Right ventricle myocardium inferior (tissue), 1 donor: ENCODE measurements at regions of chr2 and their contacts with region 1.

Region 1: DNA sequence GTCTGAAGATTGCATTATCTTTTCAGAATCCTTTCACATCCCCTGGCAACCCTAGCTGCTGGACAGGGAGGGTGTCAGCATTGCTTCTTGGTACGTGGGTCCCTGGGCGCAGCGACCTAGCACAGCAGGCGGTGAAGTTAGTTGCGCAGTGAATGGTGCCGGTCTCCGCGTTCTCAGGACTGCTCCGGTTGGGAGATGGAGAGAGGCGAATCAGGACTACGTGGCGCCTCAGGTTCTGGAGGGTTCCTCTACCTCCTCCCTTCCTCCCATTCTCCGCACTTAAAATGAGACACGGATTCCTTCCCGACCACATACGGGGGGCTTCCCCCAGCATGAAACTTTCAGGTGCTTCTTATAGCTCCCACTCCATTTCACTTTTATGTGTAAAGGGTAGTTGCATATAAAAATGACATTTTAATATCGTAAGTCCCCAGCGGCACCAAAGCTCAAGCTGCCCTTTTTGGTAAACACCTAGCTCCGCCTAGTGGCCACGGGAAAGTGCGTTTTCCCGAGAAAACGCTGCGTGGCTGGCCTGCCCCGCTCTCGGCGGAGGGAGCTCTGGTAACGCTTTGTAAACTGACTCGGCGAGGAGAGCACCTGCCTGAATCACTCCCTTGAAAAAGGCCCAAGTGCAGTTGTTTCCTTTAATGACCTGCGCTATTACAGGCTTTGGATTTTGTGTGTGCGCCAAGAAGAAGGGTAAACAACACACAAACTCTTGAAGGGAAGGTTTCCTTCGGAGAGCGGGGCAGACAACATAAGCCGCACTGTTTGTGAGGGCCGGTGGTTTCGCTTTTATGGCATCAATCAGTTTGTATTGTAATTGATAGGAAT is 32.9 kb upstream of the INHBB start:
- DNase-seq: peak; percentile 86
- ATAC-seq: peak; percentile 85

Region 2: DNA sequence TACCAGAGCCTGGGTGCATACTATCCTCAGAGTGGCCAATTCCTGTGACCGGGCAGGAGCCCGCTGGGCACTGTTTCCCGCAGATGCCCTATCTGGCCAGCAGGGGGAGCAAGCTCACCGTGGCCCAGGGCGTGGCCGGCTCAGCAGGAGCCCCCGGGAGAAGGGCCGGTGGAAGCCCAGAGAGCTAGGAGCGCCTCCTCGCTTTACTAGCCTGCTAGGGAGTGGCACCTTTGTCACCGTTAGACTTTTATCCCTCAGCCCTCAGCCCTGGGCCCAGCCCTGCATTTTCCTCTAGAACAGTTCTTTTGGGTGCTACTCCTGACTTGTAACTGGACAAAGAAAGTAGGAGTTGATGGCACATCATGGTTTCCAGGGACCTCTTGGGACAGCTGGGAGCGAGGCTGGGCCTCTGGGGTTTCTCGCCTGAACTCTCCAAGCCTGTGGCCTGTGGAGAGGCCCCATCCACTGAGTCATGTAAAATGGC is 610.1 kb before region 1 on chr2:
- intact Hi-C with region 1: loop called (anchors 10 kb)
- DNase-seq: peak; percentile 87
- ATAC-seq: peak; percentile 86

Region 3: GRCh38 chr2:120109186-120110061 is 203.7 kb before region 1 on chr2:
- intact Hi-C with region 1: loop called (anchors 2 kb)
- DNase-seq: no peak
- ATAC-seq: peak; percentile 55

Region 4: GRCh38 chr2:120223034-120223912 is 89.8 kb before region 1 on chr2 and contains the start of gene TMEM185B:
- intact Hi-C with region 1: loop called (anchors 10 kb)
- DNase-seq: peak; percentile 94
- ATAC-seq: peak; percentile 97
- total RNA-seq, gene TMEM185B: 20.6 TPM

Region 5: GRCh38 chr2:120252225-120253021 is 60.7 kb before region 1 on chr2 and contains the start of gene RALB:
- intact Hi-C with region 1: loop called (anchors 1 kb)
- DNase-seq: peak; percentile 100
- ATAC-seq: peak; percentile 96
- total RNA-seq, gene RALB: 52.0 TPM

Region 6: GRCh38 chr2:120613742-120614571 is 300.9 kb after region 1 on chr2:
- intact Hi-C with region 1: no loop called
- DNase-seq: no peak
- ATAC-seq: no peak

Region 7: DNA sequence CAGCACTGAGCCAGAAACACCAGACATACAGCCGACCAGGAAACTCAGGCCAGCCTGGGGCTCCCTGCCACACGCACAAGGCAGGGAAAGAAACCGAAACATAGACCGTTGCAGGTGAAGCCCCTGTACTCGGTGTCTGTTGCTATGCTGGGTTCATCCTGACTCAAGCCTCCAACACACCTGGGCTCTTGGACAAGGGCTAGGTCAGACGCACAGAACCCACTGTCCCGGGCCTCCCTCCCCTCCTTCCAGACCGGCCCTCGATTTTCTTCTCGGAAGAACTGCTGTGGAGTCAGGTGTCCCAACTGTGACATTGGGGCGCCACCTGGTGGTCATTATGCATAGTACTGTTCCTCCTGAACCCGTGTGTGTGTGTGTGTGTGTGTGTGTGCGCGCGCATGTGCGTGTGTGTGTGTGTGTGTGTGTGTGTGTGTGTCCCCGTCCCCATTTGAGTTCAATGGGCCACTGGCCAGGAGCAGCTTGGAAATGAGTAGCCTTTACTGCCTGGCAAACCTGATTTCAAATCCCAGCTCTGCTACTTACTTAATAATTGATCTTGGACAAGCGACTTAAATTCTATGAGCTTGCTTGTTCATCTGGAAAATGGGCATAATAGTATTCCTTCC is 367.2 kb after region 1 on chr2:
- intact Hi-C with region 1: loop called (anchors 10 kb)
- DNase-seq: peak; percentile 86
- ATAC-seq: peak; percentile 81

Region 8: GRCh38 chr2:120729406-120730399 is 416.6 kb after region 1 on chr2:
- intact Hi-C with region 1: no loop called
- DNase-seq: no peak
- ATAC-seq: peak; percentile 67